ENCODE measurements at regions of chr17 and their contacts with region 1.

Region 1: DNA sequence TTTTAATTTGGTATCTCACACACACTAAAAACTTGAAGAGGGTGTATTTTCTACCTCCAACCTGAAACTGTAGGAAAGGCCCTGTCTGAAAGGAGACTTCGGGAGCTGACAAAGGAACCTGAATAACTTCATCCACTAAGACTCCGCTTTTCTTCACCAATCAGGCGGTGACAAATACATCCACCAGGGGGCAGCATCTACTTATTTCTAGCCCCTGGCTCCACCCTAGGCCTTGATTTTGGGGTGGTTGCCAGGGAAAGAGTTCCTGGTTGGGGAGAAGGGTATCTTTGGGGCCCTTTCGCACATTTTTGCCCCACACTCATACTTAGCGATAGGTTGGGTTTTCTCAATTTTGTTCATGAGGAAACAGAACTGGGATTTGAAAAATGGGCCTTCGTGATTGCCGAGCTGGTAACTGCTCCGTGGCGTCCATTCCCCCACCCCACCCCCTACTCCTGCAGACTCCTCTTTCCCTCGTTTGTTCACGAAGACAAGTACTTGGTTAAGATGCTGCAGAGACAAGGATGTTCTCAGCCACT is 4.8 kb upstream of the ARL4D start:
- DNase-seq: peak; percentile 97
- ATAC-seq: peak; percentile 41
- H3K4me3 Mint-ChIP-seq: no peak overlapping the region
- H3K27ac Mint-ChIP-seq: peak overlapping the region; percentile 20
- H3K4me1 Mint-ChIP-seq: peaks cover 15% of the 10 kb centered on the region
- H3K27me3 Mint-ChIP-seq: no peaks in the 10 kb centered on the region
- CTCF ChIP-seq: peak; percentile 87

Region 2: DNA sequence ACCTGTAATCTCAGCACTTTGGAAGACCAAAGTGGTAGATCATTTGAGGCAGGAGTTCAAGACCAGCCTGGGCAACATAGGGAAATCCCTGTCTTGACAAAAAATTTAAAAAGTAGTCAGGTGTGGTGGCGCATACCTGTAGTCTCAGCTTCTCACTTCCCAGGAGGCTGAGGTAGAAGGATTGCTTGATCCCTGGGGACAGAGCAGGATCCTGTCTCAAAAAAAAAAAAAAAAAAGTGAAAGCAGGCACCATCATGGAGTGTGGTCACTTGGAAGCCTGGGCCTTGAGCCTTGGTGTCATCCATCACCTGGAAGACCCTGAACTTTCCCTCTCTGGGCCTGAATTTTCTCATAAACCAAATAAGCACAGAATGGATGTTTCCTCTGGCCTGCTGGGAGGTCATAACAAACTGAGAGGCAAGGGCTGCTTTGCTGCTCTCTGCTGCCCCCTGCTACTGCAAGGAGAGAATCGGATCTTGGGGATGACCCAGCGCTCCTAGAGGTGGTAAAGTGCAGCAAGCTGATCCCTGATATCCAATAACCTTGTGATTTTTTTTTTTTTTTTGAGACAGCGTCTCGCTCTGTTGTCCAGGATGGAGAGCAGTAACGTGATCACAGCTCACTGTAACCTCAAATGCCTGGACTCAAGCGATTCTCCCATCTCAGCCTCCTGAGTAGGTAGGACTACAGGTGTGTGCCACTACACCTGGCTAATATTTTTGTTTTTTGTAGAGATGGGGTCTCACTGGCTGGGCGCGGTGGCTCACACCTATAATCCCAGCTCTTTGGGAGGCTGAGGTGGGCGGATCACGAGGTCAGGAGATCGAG is 84.3 kb before region 1 on chr17:
- CTCF ChIA-PET with region 1: no interaction called
- POLR2A ChIA-PET with region 1: no interaction called
- intact Hi-C with region 1: no loop called
- DNase-seq: no peak
- ATAC-seq: no peak
- H3K4me3 Mint-ChIP-seq: no peak overlapping the region
- H3K27ac Mint-ChIP-seq: no peak overlapping the region
- H3K4me1 Mint-ChIP-seq: peaks cover 9% of the 10 kb centered on the region
- H3K27me3 Mint-ChIP-seq: no peaks in the 10 kb centered on the region
- CTCF ChIP-seq: no peak

Region 3: DNA sequence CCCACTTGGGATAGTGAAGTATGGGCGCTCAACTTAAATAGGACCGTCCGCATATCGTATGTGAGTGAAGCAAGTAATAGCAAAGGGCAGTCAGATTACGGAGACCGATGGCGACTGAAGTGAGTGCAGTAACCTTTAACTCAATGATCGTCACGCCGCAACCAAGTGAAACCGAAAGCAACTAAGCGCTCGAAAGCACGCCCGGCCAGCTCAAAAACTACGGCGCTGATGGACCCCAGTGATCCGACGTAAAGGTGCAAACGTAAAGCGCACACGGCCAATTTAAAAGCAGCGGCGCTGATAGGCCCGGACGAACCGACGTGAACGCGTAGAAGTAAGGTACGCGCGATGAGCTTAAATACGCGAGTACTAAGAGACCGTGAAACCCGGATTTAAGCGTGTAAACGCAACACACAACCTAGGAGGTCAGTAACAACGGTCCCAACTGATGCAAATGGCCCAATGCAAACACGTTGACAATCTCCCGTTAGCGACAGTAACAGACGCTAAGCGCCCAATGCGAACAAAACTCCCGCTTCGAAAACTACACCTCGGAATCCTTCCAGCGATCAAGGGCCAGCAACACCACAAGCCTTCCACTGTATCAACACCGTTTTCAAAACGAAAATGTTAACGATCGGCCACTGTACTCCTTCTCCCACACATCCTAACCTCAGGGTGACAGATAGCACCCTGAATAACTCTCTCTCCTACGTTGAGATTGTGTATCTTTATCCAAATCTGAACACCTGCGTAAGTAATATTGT is 33.1 kb before region 1 on chr17:
- CTCF ChIA-PET with region 1: interaction called, 5 read pairs
- POLR2A ChIA-PET with region 1: interaction called, 138 read pairs
- intact Hi-C with region 1: no loop called
- DNase-seq: peak; percentile 97
- ATAC-seq: peak; percentile 86
- H3K4me3 Mint-ChIP-seq: peak overlapping the region; percentile 83
- H3K27ac Mint-ChIP-seq: peak overlapping the region; percentile 99
- H3K4me1 Mint-ChIP-seq: peaks cover 43% of the 10 kb centered on the region
- H3K27me3 Mint-ChIP-seq: peaks cover 4% of the 10 kb centered on the region
- CTCF ChIP-seq: no peak

Region 4: GRCh38 chr17:43406676-43407645 is 12.9 kb after region 1 on chr17:
- CTCF ChIA-PET with region 1: interaction called, 24 read pairs
- POLR2A ChIA-PET with region 1: interaction called, 4 read pairs
- intact Hi-C with region 1: no loop called
- DNase-seq: no peak
- ATAC-seq: no peak
- H3K4me3 Mint-ChIP-seq: no peak overlapping the region
- H3K27ac Mint-ChIP-seq: no peak overlapping the region
- H3K4me1 Mint-ChIP-seq: no peaks in the 10 kb centered on the region
- H3K27me3 Mint-ChIP-seq: peaks cover 2% of the 10 kb centered on the region
- CTCF ChIP-seq: no peak

Region 5: GRCh38 chr17:43428524-43428923 is 34.5 kb after region 1 on chr17:
- CTCF ChIA-PET with region 1: interaction called, 11 read pairs
- POLR2A ChIA-PET with region 1: interaction called, 3 read pairs
- intact Hi-C with region 1: no loop called
- DNase-seq: no peak
- ATAC-seq: no peak
- H3K4me3 Mint-ChIP-seq: no peak overlapping the region
- H3K27ac Mint-ChIP-seq: no peak overlapping the region
- H3K4me1 Mint-ChIP-seq: no peaks in the 10 kb centered on the region
- H3K27me3 Mint-ChIP-seq: peaks cover 23% of the 10 kb centered on the region
- CTCF ChIP-seq: no peak

Measured in activated CD8-positive, alpha-beta T cell treated with anti-CD3 and anti-CD28 coated beads for 36 hours (primary cell).